ENCODE measurements at regions of chr12 and their contacts with region 1.

Region 1: GRCh38 chr12:8996682-8997360 is 7.5 kb downstream of the KLRG1 start:
- DNase-seq: peak in 3 of 35 experiments; percentile 5 to 51 (median 32)
- ATAC-seq: peak; percentile 44 to 88 (median 85)
- H3K4me3 ChIP-seq: peak overlapping the region in 1 of 2 donors; percentile 19
- H3K4me3 Mint-ChIP-seq: peak overlapping the region; percentile 15 to 40 (median 29)
- H3K27ac ChIP-seq: peak overlapping the region; percentile 65
- H3K27ac Mint-ChIP-seq: peak overlapping the region; percentile 90 to 98
- H3K4me1 ChIP-seq: peaks cover 25 to 52% of the 10 kb centered on the region in 2 experiments
- H3K4me1 Mint-ChIP-seq: peaks cover 61 to 84% (median 73%) of the 10 kb centered on the region in 3 donors
- H3K27me3 ChIP-seq: no peaks in the 10 kb centered on the region
- H3K27me3 Mint-ChIP-seq: no peaks in the 10 kb centered on the region

Region 2: DNA sequence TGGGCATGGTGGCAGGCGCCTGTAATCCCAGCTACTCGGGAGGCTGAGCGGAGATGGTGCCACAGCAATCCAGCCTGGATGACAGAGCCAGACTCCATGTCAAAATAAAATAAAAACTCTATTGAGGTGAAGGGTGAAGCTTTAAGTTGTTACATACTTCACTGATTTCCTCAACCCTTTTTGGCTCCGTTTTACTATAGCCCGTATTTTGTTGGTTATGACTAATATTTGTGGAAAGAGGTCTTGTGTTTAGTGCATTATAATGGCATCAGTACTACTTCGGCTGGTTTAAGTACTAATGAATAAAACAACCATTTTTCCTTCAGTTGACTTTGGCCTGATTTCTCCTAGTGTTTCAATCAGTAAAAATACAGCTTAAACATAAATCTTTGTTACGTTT is 1097.1 kb before region 1 on chr12:
- CTCF ChIA-PET with region 1: no interaction called
- POLR2A ChIA-PET with region 1: interaction called in 1 of 2 experiments, 10 read pairs
- DNase-seq: no peak
- ATAC-seq: no peak
- H3K4me3 ChIP-seq: no peak overlapping the region
- H3K4me3 Mint-ChIP-seq: no peak overlapping the region
- H3K27ac ChIP-seq: no peak overlapping the region
- H3K27ac Mint-ChIP-seq: no peak overlapping the region
- H3K4me1 ChIP-seq: no peaks in the 10 kb centered on the region
- H3K4me1 Mint-ChIP-seq: no peaks in the 10 kb centered on the region
- H3K27me3 ChIP-seq: no peaks in the 10 kb centered on the region
- H3K27me3 Mint-ChIP-seq: no peaks in the 10 kb centered on the region

Region 3: DNA sequence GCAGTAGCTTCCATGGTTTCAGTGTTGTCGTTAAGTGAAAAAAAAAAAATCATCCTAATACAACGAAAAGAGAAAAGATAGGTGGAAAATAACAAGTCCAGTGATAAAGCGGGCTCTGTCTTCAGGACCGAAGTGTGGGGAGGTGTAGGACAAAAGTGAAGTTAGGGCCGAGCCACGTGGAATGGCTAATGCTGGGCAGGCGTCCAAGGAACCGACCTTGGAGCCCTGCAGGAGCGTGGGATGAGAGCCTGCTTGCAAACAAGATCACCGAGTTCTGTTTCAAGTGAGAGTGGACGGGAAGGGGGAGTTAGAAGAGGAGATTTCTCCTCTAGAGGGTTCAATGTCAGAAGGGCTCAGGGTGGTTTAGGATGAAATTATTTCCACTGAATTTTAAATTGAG is 152.2 kb before region 1 on chr12:
- CTCF ChIA-PET with region 1: no interaction called
- POLR2A ChIA-PET with region 1: no interaction called
- DNase-seq: no peak
- ATAC-seq: no peak
- H3K4me3 ChIP-seq: no peak overlapping the region
- H3K4me3 Mint-ChIP-seq: no peak overlapping the region
- H3K27ac ChIP-seq: no peak overlapping the region
- H3K27ac Mint-ChIP-seq: no peak overlapping the region
- H3K4me1 ChIP-seq: no peaks in the 10 kb centered on the region
- H3K4me1 Mint-ChIP-seq: peaks cover 0 to 2% (median 0%) of the 10 kb centered on the region in 3 donors
- H3K27me3 ChIP-seq: peaks cover 0 to 7% of the 10 kb centered on the region in 2 experiments
- H3K27me3 Mint-ChIP-seq: peaks cover 19 to 24% of the 10 kb centered on the region in 2 donors

Region 4: DNA sequence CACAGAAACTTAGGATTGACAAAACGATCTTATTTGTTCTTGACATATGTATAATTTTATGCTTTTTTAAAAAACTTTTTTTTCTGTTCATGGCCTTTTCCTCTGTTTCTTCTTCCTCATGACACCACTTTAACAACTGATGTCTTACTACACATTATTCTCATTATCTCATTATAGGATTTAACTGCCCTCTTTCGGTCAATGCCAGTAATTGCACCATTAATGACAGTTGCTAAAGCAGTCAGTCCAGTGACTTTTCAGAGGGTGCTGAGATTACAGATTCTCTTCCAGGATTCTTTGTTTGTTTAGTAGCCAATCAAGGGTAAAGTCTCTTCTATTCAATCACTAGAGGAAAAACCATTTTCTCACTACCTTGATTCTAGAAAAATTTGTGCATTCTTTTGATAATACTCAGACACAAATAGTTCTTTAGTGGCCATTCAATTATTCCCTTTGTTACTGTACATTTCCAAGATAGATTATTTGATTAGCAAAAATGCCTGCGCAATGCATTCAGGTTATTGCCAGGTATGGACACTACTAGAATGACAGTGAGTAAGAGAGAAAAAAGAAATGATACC is 42.7 kb after region 1 on chr12:
- CTCF ChIA-PET with region 1: interaction called, 3 to 12 read pairs
- POLR2A ChIA-PET with region 1: no interaction called
- DNase-seq: peak in 7 of 35 experiments; percentile 11 to 75 (median 24)
- ATAC-seq: peak; percentile 70 to 86 (median 80)
- H3K4me3 ChIP-seq: no peak overlapping the region
- H3K4me3 Mint-ChIP-seq: peak overlapping the region in 1 of 3 donors; percentile 16
- H3K27ac ChIP-seq: peak overlapping the region; percentile 40
- H3K27ac Mint-ChIP-seq: peak overlapping the region; percentile 80 to 92
- H3K4me1 ChIP-seq: peaks cover 34 to 35% of the 10 kb centered on the region in 2 experiments
- H3K4me1 Mint-ChIP-seq: peaks cover 41 to 73% (median 70%) of the 10 kb centered on the region in 3 donors
- H3K27me3 ChIP-seq: no peaks in the 10 kb centered on the region
- H3K27me3 Mint-ChIP-seq: no peaks in the 10 kb centered on the region

Measured in T-cell (primary cell).